ENCODE measurements at regions of chr9 and their contacts with region 1.

Region 1: DNA sequence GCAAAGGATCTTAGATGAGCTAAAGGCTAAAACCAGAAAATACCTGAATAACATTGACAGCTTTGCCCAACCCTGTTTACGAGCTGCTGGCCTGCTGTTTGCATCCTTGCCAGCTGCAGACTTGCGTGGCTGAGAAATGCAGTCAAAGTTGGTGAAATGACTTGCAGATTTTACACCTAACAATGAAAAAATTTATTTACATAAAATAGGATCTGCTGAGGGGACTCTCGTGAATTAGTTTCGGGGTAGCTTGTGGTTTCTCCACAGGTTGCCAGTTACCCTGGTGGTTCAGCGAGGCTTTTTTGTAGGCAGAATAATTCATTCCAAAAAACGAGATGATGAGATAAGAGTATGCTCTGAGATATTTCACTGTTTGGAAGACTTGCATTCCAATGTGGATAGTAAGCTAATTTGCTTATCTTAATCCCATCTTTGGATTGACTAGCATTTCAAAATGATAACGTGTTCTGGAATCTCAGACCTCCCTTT is 65.7 kb upstream of the FANCC start:
- DNase-seq: no peak
- ATAC-seq: no peak
- H3K4me3 ChIP-seq: no peak overlapping the region
- H3K27ac ChIP-seq: no peak overlapping the region
- H3K4me1 ChIP-seq: no peaks in the 10 kb centered on the region
- H3K27me3 ChIP-seq: peaks cover 0 to 14% (median 0%) of the 10 kb centered on the region in 9 donors
- CTCF ChIP-seq: no peak
- POLR2A ChIP-seq: no peak

Region 2: DNA sequence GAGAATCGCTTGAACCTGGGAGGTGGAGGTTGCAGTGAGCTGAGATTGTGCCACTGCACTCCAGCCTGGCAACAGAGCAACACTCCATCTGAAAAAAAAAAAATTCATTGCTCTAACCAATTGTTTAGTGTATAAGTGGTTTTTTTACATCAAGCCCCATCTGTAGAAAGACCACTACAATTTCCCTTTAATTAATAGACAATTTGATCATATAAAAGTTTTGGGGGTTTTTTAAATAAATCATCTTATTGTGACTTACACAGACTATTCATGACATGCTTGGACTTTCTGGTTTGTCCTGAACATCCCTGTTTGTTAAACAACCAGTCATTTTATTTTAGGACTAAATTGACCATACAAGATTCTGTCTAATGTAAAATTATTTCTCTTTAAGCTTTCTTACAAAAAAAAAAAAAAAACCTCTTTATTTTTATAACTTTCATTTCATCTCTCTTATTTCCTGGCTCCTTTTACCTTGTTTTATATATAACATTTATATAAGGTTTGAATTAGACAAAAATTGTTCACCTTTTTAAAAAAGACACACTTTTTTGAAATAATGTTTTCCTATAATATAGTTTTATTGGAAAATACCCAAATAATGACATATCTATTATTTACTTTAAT is 55.9 kb before region 1 on chr9:
- intact Hi-C with region 1: loop called in 1 of 10 experiments (anchors 10 kb)
- DNase-seq: no peak
- ATAC-seq: no peak
- H3K4me3 ChIP-seq: no peak overlapping the region
- H3K27ac ChIP-seq: no peak overlapping the region
- H3K4me1 ChIP-seq: no peaks in the 10 kb centered on the region
- H3K27me3 ChIP-seq: peaks cover 0 to 9% (median 0%) of the 10 kb centered on the region in 9 donors
- CTCF ChIP-seq: no peak
- POLR2A ChIP-seq: no peak

Measured in heart left ventricle (tissue), 16 donors.